ENCODE measurements at regions of chr7 and their contacts with region 1.

Region 1: GRCh38 chr7:100247152-100247757 is 27.5 kb downstream of the PVRIG start:
- DNase-seq: peak; percentile 90
- ATAC-seq: peak; percentile 89
- H3K4me3 ChIP-seq: no peak overlapping the region
- H3K27ac ChIP-seq: peak overlapping the region; percentile 47
- H3K4me1 ChIP-seq: peaks cover 65% of the 10 kb centered on the region
- H3K27me3 ChIP-seq: no peaks in the 10 kb centered on the region
- CTCF ChIP-seq: peak; percentile 20; the same call in 1 of the 2 replicates
- EP300 ChIP-seq: peak in 1 of 2 experiments; percentile 77; a peak in 2 of 4 replicates
- POLR2A ChIP-seq: no peak
- RAD21 ChIP-seq: no peak

Region 2: DNA sequence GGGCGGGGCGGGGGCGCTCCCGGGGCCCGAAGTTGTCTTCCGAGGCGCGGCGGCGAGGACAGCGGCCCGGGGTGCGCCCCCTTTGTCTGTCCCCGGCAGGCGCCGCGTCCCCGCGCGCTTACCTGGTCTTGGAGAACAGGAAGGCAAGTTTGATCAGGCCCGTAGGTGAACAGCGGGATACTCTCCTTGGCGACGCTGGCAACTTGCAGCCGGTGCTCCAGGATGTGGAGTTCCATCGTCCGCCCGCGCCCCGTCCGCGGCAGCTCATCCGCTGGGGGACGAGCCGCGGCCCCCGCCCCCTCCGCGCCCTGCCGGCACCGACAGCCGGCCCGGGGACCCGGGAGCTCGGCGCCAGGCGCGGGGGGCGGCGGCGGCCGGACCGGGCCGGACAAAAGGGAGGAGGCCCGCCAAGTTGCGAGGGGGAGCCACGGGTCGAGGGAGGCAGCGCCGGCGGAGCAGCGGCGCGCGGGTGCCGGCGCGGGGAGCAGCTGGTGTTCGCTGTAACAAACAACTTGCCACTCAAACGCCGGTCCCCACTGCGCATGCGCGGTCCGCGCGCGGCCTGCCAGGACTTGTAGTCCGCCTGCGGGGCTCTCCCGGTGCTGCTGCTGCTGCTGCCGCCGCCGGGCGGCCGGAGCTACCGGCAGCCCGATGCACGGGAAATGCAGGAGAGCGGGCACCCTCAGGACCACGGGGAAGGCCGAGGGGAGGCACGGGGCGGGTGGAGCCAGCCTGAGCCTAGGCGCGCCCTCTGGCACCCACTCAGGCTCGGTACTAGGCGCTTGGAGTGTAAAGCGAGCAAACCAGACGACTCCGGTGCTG is 24.7 kb after region 1 on chr7:
- CTCF ChIA-PET with region 1: no interaction called
- POLR2A ChIA-PET with region 1: interaction called, 5 read pairs
- in situ Hi-C with region 1: no loop called
- intact Hi-C with region 1: loop called (anchors 2 kb)
- DNase-seq: peak; percentile 92
- ATAC-seq: peak; percentile 53
- H3K4me3 ChIP-seq: peak overlapping the region; percentile 62 to 80 (median 71); a peak in 4 of 6 replicates
- H3K27ac ChIP-seq: peak overlapping the region; percentile 50
- H3K4me1 ChIP-seq: peaks cover 42% of the 10 kb centered on the region
- H3K27me3 ChIP-seq: no peaks in the 10 kb centered on the region
- CTCF ChIP-seq: peak; percentile 62
- EP300 ChIP-seq: no peak
- POLR2A ChIP-seq: peak in 1 of 2 experiments; percentile 25; a peak in 1 of 4 replicates
- RAD21 ChIP-seq: peak; percentile 80

Region 3: DNA sequence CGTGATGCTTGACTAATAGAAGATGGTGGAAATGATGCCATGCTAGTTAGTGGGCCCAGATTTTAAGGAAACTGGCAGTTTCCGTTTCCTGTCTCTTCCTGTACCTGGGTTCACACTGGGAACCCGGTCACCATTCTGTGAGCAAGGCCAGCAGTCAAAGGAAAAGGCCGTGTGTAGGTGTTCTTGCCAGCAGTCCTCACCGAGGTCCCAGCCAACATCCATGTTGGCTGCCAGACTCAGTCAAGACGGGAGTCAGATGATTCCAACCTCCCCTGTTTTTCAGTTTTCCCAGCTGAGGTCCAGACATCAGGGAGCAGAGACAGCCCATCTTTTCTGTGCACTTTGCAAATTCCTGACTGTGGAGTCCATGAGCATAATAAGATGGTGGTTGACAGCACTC is 95.5 kb after region 1 on chr7:
- CTCF ChIA-PET with region 1: no interaction called
- POLR2A ChIA-PET with region 1: interaction called, 3 read pairs
- in situ Hi-C with region 1: no loop called
- intact Hi-C with region 1: loop called (anchors 10 kb)
- DNase-seq: no peak
- ATAC-seq: no peak
- H3K4me3 ChIP-seq: no peak overlapping the region
- H3K27ac ChIP-seq: no peak overlapping the region
- H3K4me1 ChIP-seq: peaks cover 16% of the 10 kb centered on the region
- H3K27me3 ChIP-seq: no peaks in the 10 kb centered on the region
- CTCF ChIP-seq: no peak
- EP300 ChIP-seq: no peak
- POLR2A ChIP-seq: no peak
- RAD21 ChIP-seq: no peak